ENCODE measurements at regions of chr7 and their contacts with region 1.

Region 1: DNA sequence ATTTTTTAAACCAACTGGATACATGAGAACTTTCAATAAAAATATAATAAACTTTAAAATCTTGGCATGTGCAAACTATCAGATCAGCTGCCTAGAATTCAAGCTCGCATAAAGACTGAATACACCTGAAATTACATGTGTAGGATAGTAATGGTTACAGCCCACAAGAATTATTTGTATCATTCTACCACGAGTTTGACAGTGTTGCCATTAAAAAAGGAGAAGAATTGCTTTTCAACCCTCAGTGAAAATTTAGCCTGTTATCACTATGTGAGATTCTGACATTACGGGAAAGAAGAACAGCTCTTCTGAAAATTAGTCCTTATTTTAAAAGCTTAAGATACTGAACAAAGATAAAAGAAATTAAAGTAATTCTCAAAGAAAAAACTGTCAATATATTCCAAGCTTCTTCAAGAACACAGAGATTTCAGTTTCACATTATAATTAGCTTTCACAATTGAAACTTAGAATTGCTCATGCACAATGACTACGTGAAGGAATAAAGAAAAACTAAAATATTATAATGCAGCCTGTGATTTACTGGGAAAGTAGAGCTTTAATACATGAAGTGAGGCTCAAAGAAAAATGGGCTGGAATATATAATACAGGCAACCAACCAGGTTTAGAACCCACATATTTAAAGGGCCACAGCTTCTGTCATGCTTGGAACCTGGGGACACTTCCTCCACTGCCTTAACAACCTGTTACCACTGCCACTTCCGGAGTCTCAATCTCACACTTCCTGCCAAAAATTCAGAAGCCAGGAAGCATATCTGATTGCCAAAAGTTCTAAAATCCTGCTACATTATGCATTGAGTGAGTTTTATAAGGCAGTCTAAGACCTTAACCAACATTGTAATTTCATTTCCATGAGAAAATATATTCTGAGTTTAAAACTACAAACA is 23.2 kb downstream of the TPK1 start:
- DNase-seq: no peak
- H3K4me3 ChIP-seq: no peak overlapping the region
- H3K27ac ChIP-seq: no peak overlapping the region
- H3K4me1 ChIP-seq: peaks cover 9% of the 10 kb centered on the region
- H3K27me3 ChIP-seq: no peaks in the 10 kb centered on the region
- CTCF ChIP-seq: no peak
- POLR2A ChIP-seq: no peak

Region 2: GRCh38 chr7:144629011-144629410 is 183.6 kb before region 1 on chr7:
- CTCF ChIA-PET with region 1: no interaction called
- POLR2A ChIA-PET with region 1: no interaction called
- dilution Hi-C with region 1: no loop called
- intact Hi-C with region 1: no loop called
- DNase-seq: no peak
- H3K4me3 ChIP-seq: no peak overlapping the region
- H3K27ac ChIP-seq: no peak overlapping the region
- H3K4me1 ChIP-seq: no peaks in the 10 kb centered on the region
- H3K27me3 ChIP-seq: no peaks in the 10 kb centered on the region
- CTCF ChIP-seq: no peak
- POLR2A ChIP-seq: no peak

Region 3: DNA sequence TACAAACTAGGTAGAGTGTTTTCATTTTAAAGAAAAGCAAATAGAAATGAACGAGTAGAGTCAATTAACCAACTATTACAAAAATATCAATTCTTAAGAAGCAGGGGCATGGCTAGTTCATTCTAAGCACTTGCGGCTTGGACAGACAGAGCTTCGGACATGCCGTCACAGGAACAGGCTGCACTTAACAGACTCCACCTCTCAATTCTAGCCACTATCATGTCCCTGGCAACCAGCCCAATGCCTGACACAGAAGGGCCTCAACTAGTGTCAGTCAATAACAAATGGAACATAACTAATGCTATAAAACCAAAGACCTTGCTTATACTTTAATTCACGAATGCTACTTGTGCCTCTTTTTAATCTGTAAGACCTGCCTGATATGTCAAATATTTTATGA is 51.1 kb before region 1 on chr7:
- CTCF ChIA-PET with region 1: no interaction called
- POLR2A ChIA-PET with region 1: no interaction called
- dilution Hi-C with region 1: no loop called
- intact Hi-C with region 1: no loop called
- DNase-seq: no peak
- H3K4me3 ChIP-seq: no peak overlapping the region
- H3K27ac ChIP-seq: no peak overlapping the region
- H3K4me1 ChIP-seq: no peaks in the 10 kb centered on the region
- H3K27me3 ChIP-seq: no peaks in the 10 kb centered on the region
- CTCF ChIP-seq: no peak
- POLR2A ChIP-seq: no peak

Region 4: GRCh38 chr7:144835652-144836544 is 23.3 kb after region 1 on chr7 and contains the start of gene TPK1:
- CTCF ChIA-PET with region 1: interaction called, 6 read pairs
- POLR2A ChIA-PET with region 1: no interaction called
- dilution Hi-C with region 1: no loop called
- intact Hi-C with region 1: loop called (anchors 1 kb)
- DNase-seq: peak; percentile 97
- H3K4me3 ChIP-seq: peak within 1 kb of the TSS; percentile 45 to 97 (median 96)
- H3K27ac ChIP-seq: peak within 1 kb of the TSS; percentile 96
- H3K4me1 ChIP-seq: peaks cover 5% of the 10 kb centered on the region
- H3K27me3 ChIP-seq: no peaks in the 10 kb centered on the region
- CTCF ChIP-seq: no peak
- POLR2A ChIP-seq: peak; percentile 82
- total RNA-seq, gene TPK1: 8.3 and 9.3 TPM in 2 replicates

Region 5: DNA sequence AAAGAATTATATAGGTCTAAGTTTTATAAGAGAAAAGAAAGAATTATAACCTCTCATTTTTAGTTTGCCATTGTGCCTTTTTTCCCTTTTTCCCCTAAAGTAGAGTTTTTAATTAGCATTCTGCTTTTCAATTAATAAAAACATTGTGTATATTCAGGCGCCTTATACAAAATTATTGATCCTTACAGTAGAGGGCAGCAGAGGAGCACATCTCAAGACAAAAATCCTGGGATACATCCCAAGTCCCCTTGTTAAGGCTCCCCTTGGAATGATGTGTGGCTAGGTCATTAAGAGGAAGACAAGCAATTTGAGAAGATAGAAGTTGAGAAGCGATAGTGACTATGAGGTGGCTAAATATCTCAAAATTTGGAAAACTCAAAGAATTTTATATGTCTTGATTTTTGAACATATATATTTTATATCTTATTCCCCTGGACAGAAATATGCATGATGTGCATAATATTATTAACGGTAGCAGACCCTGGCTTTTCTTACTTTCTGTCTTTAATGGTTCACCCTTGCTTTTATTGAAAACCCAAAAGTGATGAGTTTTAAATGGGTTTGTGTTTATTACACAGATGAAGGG is 42.3 kb after region 1 on chr7:
- CTCF ChIA-PET with region 1: interaction called, 13 read pairs
- POLR2A ChIA-PET with region 1: no interaction called
- dilution Hi-C with region 1: no loop called
- intact Hi-C with region 1: no loop called
- DNase-seq: peak; percentile 40
- H3K4me3 ChIP-seq: no peak overlapping the region
- H3K27ac ChIP-seq: no peak overlapping the region
- H3K4me1 ChIP-seq: no peaks in the 10 kb centered on the region
- H3K27me3 ChIP-seq: peaks cover 0 to 2% of the 10 kb centered on the region in 2 experiments
- CTCF ChIP-seq: peak; percentile 26 to 43
- POLR2A ChIP-seq: no peak

Measured in endothelial cell of umbilical vein (primary cell).